ENCODE measurements at regions of chr2 and their contacts with region 1.

Region 1: DNA sequence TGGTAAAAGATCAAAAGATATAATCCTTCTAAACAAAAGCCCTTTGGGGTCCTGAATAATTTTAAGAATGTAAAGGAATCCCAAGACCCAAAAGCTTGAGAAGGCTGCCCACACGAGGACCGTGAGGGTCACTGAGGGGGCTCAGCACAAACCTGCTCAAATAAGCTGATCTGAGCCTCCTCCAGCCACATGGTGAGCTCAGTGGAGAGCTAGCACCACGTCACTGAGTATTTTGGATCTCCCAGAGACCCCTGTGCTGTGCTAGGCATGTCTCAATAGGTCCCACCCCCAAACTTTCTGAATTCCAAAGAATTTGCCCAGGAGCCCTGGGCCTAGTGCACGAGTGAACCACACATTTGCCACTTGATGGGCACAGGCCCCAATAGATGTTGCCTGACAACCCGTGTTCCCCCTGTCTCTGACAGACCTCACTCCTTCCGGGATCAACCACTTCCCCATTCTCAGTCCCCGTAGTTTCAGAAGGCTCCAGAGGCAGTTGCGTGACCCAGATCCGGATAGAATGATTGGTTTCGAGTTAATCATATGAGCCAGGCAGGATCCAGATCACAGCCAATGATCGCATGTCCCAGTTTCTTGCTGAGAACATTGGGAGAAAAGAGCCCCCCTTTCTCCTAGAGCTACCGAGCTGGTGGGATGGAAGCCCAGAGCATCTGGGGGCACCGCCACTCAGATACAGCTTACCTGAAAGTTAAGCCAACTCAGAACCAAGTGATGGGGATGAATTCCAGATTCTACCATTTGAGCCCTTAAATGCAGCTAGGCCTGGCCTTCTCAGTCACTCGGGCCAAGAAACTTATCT is 203.8 kb downstream of the TNS1 start:
- DNase-seq: no peak
- ATAC-seq: no peak
- H3K4me3 ChIP-seq: no peak overlapping the region
- H3K27ac ChIP-seq: no peak overlapping the region
- H3K4me1 ChIP-seq: peaks cover 7% of the 10 kb centered on the region; the same call in 1 of the 2 replicates
- H3K27me3 ChIP-seq: no peaks in the 10 kb centered on the region
- CTCF ChIP-seq: no peak
- POLR2A ChIP-seq: no peak
- RAD21 ChIP-seq: no peak

Region 2: DNA sequence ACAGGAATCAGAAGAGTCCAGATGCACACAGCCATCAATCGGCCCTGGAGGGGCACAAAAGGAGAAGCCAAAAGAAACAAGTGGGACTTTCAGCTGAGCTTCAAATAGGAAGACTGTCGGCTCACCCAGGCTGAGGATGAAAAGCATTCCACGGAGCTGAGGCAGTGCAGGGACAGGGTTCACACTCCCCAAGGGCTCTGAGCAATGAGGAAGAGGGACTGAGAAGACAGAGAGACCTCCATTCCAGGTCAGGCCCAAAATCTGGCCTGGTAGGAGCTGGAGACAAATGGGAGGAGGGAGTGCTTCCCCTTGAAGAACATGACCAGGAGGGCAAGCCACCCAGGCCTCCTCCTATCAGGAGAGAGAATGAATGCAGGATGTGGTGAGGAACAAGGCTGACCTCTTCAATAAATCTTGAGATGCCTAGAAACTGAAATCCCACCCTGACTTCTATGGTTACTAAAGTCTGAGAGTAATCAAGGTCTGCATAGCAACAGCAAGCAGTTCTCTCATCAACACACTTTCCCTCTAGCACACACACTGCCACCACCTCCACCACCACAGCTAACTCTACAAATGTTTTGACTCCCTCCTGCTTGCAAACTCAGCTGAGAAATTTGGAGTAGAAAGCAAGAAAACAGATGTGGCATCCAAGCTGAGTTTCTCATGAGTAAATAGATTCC is 230.5 kb before region 1 on chr2:
- CTCF ChIA-PET with region 1: no interaction called
- POLR2A ChIA-PET with region 1: no interaction called
- dilution Hi-C with region 1: no loop called
- in situ Hi-C with region 1: no loop called
- intact Hi-C with region 1: no loop called
- DNase-seq: peak; percentile 45
- ATAC-seq: peak; percentile 87
- H3K4me3 ChIP-seq: no peak overlapping the region
- H3K27ac ChIP-seq: no peak overlapping the region
- H3K4me1 ChIP-seq: peaks cover 9% of the 10 kb centered on the region
- H3K27me3 ChIP-seq: no peaks in the 10 kb centered on the region; the same call in 1 of the 2 replicates
- CTCF ChIP-seq: no peak
- POLR2A ChIP-seq: no peak
- RAD21 ChIP-seq: no peak

Region 3: DNA sequence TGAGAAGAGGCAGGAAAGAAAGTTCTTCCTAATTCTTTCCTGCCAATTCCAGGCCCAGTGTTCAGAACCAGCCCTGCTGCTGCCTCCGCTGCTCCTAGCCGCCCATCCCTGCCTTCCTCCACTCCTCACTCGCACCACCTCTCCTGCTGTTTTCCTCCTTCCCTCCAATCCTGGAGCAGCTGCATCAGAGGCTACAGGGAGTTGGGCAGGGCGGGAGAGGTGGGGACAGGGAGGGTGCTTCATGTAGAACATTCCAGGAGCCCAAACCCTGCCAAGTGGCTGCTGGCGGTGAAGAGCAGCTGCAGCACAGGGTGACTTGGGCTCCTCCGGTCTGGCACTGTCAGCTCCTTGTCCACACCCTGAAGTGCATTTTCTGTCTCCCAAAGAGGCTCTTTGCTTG is 27.6 kb after region 1 on chr2:
- CTCF ChIA-PET with region 1: no interaction called
- POLR2A ChIA-PET with region 1: no interaction called
- dilution Hi-C with region 1: no loop called
- in situ Hi-C with region 1: no loop called
- intact Hi-C with region 1: no loop called
- DNase-seq: no peak
- ATAC-seq: no peak
- H3K4me3 ChIP-seq: no peak overlapping the region
- H3K27ac ChIP-seq: no peak overlapping the region
- H3K4me1 ChIP-seq: peaks cover 2% of the 10 kb centered on the region; the same call in 1 of the 2 replicates
- H3K27me3 ChIP-seq: no peaks in the 10 kb centered on the region
- CTCF ChIP-seq: no peak
- POLR2A ChIP-seq: no peak
- RAD21 ChIP-seq: no peak

Region 4: DNA sequence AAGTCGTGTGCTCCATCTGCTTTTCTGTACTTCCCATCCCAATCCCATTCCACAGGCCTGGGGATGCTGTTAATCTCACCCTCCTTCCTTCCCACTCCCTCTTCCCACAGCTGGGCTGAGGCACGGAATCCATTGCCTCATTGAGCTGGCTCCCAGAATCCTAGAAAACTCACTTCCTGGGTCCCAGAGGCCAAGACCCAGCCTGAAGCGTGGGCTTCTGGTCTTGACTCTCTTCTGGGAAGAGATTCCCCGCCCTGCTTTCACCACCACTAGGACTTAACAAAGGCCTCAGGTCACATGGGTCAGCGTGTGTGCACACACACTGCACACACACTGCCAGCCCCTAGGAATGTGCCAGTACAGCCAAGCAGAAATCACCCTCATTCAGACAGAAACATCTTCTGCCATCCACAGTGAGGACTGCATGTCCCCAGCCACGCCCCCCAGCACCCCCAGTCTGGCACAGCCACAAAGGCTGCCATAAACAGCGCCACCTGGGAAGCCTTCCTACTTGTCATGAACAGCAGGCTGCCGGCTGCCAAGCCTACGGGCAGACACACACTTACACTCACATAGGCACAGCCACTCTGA is 38.0 kb after region 1 on chr2:
- CTCF ChIA-PET with region 1: no interaction called
- POLR2A ChIA-PET with region 1: no interaction called
- dilution Hi-C with region 1: no loop called
- in situ Hi-C with region 1: no loop called
- intact Hi-C with region 1: loop called (anchors 1 kb)
- DNase-seq: no peak
- ATAC-seq: peak; percentile 15
- H3K4me3 ChIP-seq: no peak overlapping the region
- H3K27ac ChIP-seq: peak overlapping the region; percentile 35; the same call in 1 of the 2 replicates
- H3K4me1 ChIP-seq: peaks cover 11% of the 10 kb centered on the region
- H3K27me3 ChIP-seq: no peaks in the 10 kb centered on the region
- CTCF ChIP-seq: no peak
- POLR2A ChIP-seq: no peak
- RAD21 ChIP-seq: no peak

Region 5: GRCh38 chr2:218033590-218034496 is 234.9 kb after region 1 on chr2:
- CTCF ChIA-PET with region 1: no interaction called
- POLR2A ChIA-PET with region 1: no interaction called
- dilution Hi-C with region 1: no loop called
- in situ Hi-C with region 1: loop called (anchors 10 kb)
- intact Hi-C with region 1: no loop called
- DNase-seq: no peak
- ATAC-seq: no peak
- H3K4me3 ChIP-seq: no peak overlapping the region
- H3K27ac ChIP-seq: no peak overlapping the region
- H3K4me1 ChIP-seq: peaks cover 6% of the 10 kb centered on the region; the same call in 1 of the 2 replicates
- H3K27me3 ChIP-seq: peaks cover 40% of the 10 kb centered on the region
- CTCF ChIP-seq: no peak
- POLR2A ChIP-seq: no peak
- RAD21 ChIP-seq: no peak

Measured in IMR-90 (cell line).